ENCODE measurements at regions of chr5 and their contacts with region 1.

Region 1: DNA sequence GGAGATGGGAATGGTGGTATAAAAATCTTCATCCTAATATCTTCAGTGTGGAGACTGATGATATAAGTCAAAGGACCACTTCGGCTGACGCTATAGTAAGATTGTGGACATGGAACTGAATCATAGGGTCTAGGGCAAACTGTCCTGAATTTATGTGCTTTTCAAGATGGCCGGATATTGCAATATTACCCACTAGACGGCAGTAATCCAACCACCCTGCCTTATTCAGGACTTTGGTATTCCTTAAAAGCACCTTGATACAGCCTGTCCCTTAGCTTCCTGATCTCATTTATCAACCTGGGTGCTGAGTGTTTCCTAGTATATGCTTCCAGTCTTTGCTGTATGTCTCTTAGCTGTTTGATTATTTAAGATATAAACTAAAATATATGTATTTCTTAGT is 71.2 kb upstream of the COX7C start:
- DNase-seq: no peak
- CTCF ChIP-seq: no peak

Region 2: GRCh38 chr5:86565197-86565789 is 18.7 kb after region 1 on chr5:
- CTCF ChIA-PET with region 1: interaction called, 12 read pairs
- POLR2A ChIA-PET with region 1: no interaction called
- DNase-seq: no peak
- CTCF ChIP-seq: no peak

Region 3: DNA sequence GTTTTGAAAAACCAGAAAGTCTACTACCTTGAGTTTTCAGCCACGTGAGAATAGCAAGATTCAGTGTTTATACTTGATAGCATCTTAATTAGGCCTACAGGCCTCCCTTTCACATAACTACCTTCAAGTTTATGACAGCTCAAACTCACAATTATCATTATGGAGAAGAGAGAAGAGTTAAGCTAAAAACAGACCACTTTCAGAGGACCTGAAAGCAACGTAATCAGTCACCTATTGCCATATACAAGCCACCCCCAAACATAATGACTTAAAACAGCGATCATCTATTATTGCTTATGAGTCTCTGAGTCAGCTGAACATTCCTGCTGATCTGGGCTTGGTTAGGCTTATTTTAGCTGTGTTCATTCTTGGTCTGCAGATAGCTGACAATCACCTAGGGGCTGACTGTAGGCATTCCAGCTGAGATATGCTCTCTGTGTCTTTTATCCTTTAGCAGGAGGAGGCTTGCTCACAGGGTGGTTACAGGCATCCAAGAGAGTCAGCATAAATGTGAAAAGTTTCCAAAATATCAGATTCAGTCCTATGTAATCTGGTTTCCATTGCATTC is 202.0 kb after region 1 on chr5:
- CTCF ChIA-PET with region 1: no interaction called
- POLR2A ChIA-PET with region 1: no interaction called
- DNase-seq: no peak
- CTCF ChIP-seq: no peak

Measured in GM10248 (cell line).